MCF 10A (cell line): ENCODE measurements at regions of chr2 and their contacts with region 1.

Region 1: DNA sequence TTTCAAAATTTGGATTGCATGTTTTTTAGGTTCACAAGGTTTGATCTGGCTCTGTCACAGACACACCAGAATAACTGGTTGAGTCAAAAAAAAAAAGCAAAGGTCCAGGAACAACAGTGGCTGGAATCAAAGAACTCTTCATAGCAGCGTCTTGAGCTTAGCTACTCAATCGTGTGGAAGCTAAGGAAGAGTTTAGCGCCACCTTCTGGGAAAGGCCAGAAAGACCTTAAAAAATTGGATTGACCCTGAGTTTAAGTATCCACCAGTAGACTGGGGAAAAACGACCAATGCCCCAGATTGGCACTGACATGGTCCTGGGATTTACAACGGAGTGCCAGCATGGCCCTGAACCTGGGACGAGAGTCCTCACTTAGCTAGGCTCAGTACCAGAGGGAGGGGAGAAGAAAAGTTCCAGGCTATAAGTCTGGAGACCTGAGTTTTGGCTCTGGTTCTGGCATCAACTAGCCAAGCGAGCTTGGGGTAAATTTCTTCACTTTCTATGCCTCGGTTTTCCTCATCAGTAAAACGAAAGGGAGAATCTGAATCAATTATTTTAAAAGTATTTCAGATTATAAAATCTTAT is 71.1 kb upstream of the TFCP2L1 start:
- DNase-seq: peak; percentile 81
- H3K4me3 Mint-ChIP-seq: no peak overlapping the region
- H3K27ac Mint-ChIP-seq: peak overlapping the region; percentile 39
- H3K4me1 Mint-ChIP-seq: peaks cover 23% of the 10 kb centered on the region
- H3K27me3 Mint-ChIP-seq: no peaks in the 10 kb centered on the region
- CTCF ChIP-seq: peak; percentile 62

Region 2: GRCh38 chr2:121088251-121089165 is 267.6 kb before region 1 on chr2:
- CTCF ChIA-PET with region 1: interaction called, 356 read pairs
- POLR2A ChIA-PET with region 1: interaction called, 32 read pairs
- intact Hi-C with region 1: loop called (anchors 1 kb)
- DNase-seq: no peak
- H3K4me3 Mint-ChIP-seq: no peak overlapping the region
- H3K27ac Mint-ChIP-seq: no peak overlapping the region
- H3K4me1 Mint-ChIP-seq: peaks cover under 1% of the 10 kb centered on the region
- H3K27me3 Mint-ChIP-seq: no peaks in the 10 kb centered on the region
- CTCF ChIP-seq: no peak

Region 3: DNA sequence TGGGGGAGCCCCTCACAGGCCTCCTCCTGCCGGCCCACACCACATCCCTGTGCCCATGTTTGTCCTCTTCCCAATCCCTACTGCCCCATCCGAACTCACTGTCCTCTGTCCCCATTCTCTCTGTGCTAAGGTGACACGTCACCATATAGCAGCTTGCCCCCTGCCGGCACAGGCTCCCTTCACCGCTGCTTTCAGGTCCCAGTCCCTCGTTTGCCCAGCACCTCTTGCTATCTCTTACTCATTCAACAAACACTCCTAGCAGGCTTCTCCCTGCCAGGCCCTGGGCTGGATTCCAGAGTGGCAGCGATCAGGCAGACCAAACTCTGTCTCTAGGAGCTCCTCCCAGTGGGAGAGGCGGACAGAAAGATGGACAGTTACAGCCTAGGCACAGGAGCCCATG is 145.5 kb before region 1 on chr2:
- CTCF ChIA-PET with region 1: interaction called, 12 read pairs
- POLR2A ChIA-PET with region 1: no interaction called
- intact Hi-C with region 1: no loop called
- DNase-seq: peak; percentile 87
- H3K4me3 Mint-ChIP-seq: peak overlapping the region; percentile 6
- H3K27ac Mint-ChIP-seq: peak overlapping the region; percentile 74
- H3K4me1 Mint-ChIP-seq: peaks cover 22% of the 10 kb centered on the region
- H3K27me3 Mint-ChIP-seq: no peaks in the 10 kb centered on the region
- CTCF ChIP-seq: no peak

Region 4: GRCh38 chr2:121284463-121285449 is 71.4 kb before region 1 on chr2 and contains the start of gene TFCP2L1:
- CTCF ChIA-PET with region 1: interaction called, 7 read pairs
- POLR2A ChIA-PET with region 1: interaction called, 3 read pairs
- intact Hi-C with region 1: loop called (anchors 2 kb)
- DNase-seq: peak; percentile 61
- H3K4me3 Mint-ChIP-seq: peak within 1 kb of the TSS; percentile 97
- H3K27ac Mint-ChIP-seq: peak within 1 kb of the TSS; percentile 98
- H3K4me1 Mint-ChIP-seq: peaks cover 22% of the 10 kb centered on the region
- H3K27me3 Mint-ChIP-seq: no peaks in the 10 kb centered on the region
- CTCF ChIP-seq: no peak
- total RNA-seq, gene TFCP2L1: 22.6 and 24.3 TPM in 2 replicates

Region 5: DNA sequence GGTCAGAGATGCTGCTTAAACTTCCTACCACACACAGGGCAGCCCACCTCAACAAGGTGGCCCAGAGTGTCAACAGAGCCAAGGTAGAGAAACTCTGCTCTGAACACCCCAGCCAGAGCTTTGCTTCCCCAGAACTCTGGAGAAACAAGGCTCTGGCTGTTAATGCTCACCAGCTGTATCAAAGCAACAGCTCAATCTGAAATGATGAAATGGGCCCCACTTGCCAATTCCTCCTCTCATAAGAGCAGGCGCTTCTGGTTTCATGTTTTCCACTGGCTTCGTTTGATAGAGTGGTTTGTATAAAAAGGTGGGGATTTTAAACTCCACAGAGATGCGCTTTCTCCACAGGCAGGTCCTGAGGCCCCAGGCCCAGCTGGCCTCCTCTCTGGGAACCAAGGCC is 10.3 kb before region 1 on chr2:
- CTCF ChIA-PET with region 1: interaction called, 23 read pairs
- POLR2A ChIA-PET with region 1: interaction called, 4 read pairs
- intact Hi-C with region 1: no loop called
- DNase-seq: no peak
- H3K4me3 Mint-ChIP-seq: no peak overlapping the region
- H3K27ac Mint-ChIP-seq: no peak overlapping the region
- H3K4me1 Mint-ChIP-seq: peaks cover 15% of the 10 kb centered on the region
- H3K27me3 Mint-ChIP-seq: no peaks in the 10 kb centered on the region
- CTCF ChIP-seq: no peak

Region 6: GRCh38 chr2:121442889-121443288 is 86.7 kb after region 1 on chr2:
- CTCF ChIA-PET with region 1: no interaction called
- POLR2A ChIA-PET with region 1: no interaction called
- intact Hi-C with region 1: no loop called
- DNase-seq: no peak
- H3K4me3 Mint-ChIP-seq: no peak overlapping the region
- H3K27ac Mint-ChIP-seq: no peak overlapping the region
- H3K4me1 Mint-ChIP-seq: peaks cover 6% of the 10 kb centered on the region
- H3K27me3 Mint-ChIP-seq: no peaks in the 10 kb centered on the region
- CTCF ChIP-seq: no peak